Left lung (tissue), 14 donors: ENCODE measurements at regions of chr19 and their contacts with region 1.

Region 1: DNA sequence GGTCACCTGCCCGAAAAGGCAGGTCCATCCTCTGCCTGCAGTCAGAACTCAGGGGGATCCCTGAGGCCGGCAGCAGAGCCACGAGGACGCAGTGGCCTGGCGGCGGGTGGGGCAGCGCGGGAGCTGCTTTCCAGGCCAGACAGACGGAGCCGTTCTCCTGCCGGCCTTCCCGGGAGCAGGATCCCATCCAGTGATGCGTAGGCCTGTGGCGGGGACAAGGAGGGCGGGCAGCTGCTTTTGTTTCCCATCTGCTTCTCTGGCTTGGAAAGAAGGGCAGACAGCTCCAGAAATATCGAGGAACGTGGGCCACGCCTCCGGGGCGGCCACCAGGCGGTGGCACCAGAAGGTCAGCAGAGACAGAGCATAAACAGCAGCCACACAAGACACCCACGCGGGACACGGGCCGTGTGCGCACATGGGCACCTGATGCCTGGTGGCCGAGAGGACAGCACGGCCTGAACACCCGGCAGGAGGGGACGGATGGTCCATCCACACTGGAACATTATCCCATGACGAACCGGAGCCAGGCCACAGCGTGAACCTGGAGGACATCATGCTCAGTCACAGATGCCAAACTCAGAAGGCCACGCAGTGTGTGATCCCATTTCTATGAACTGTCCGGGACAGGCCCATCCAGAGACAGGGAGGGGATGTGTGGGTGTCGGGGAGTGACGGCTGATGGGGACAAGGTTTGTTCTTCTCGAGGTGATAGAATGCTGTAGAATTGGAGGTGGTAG is 13.9 kb upstream of the MKNK2 start:
- DNase-seq: no peak
- ATAC-seq: no peak
- H3K4me3 ChIP-seq: no peak overlapping the region
- H3K27ac ChIP-seq: peak overlapping the region; percentile 42 to 49
- H3K4me1 ChIP-seq: peaks cover 24 to 39% of the 10 kb centered on the region in 2 donors
- H3K27me3 ChIP-seq: no peaks in the 10 kb centered on the region
- CTCF ChIP-seq: no peak

Region 2: GRCh38 chr19:2016041-2016807 is 48.7 kb before region 1 on chr19:
- intact Hi-C with region 1: loop called in 1 of 2 experiments (anchors 5 kb)
- DNase-seq: peak in 3 of 4 donors; percentile 54 to 83 (median 81)
- ATAC-seq: peak; percentile 84
- H3K4me3 ChIP-seq: peak overlapping the region in 1 of 2 donors; percentile 56
- H3K27ac ChIP-seq: peak overlapping the region in 1 of 2 donors; percentile 45
- H3K4me1 ChIP-seq: peaks cover 0 to 18% of the 10 kb centered on the region in 2 donors
- H3K27me3 ChIP-seq: no peaks in the 10 kb centered on the region
- CTCF ChIP-seq: no peak

Region 3: GRCh38 chr19:2113439-2114211 is 48.7 kb after region 1 on chr19:
- intact Hi-C with region 1: no loop called
- DNase-seq: no peak
- ATAC-seq: no peak
- H3K4me3 ChIP-seq: no peak overlapping the region
- H3K27ac ChIP-seq: no peak overlapping the region
- H3K4me1 ChIP-seq: no peaks in the 10 kb centered on the region
- H3K27me3 ChIP-seq: no peaks in the 10 kb centered on the region
- CTCF ChIP-seq: no peak

Region 4: GRCh38 chr19:2239771-2240770 is 175.1 kb after region 1 on chr19:
- intact Hi-C with region 1: no loop called
- DNase-seq: no peak
- ATAC-seq: no peak
- H3K4me3 ChIP-seq: peak overlapping the region; percentile 22 to 98
- H3K27ac ChIP-seq: peak overlapping the region; percentile 41 to 73
- H3K4me1 ChIP-seq: peaks cover 41 to 69% of the 10 kb centered on the region in 2 donors
- H3K27me3 ChIP-seq: no peaks in the 10 kb centered on the region
- CTCF ChIP-seq: no peak